ENCODE measurements at regions of chr4 and their contacts with region 1.

Region 1: DNA sequence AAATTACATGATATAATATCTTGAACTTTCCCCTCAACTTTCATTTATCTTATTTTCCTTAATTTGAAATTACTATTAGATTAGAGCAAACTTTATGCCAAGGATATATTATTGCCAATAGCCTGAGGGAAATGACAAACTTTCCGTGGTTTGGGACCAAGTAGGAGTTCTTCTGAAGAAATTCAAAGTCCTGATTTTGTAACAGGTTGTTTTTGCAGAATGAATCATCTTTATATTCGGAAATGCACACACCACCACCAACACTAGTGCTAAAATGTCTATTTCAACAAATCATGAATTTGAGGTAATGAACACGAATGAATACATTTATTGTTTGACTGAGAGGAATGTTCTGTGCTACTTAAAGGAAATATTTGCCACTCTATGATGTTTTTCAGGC is 226.7 kb downstream of the GRIA2 start:
- DNase-seq: no peak
- ATAC-seq: no peak
- H3K4me3 ChIP-seq: no peak overlapping the region
- H3K27ac ChIP-seq: no peak overlapping the region
- H3K4me1 ChIP-seq: no peaks in the 10 kb centered on the region
- H3K27me3 ChIP-seq: no peaks in the 10 kb centered on the region
- CTCF ChIP-seq: no peak
- POLR2A ChIP-seq: no peak
- RAD21 ChIP-seq: no peak

Region 2: GRCh38 chr4:157217708-157218107 is 229.5 kb before region 1 on chr4:
- CTCF ChIA-PET with region 1: no interaction called
- POLR2A ChIA-PET with region 1: no interaction called
- RAD21 ChIA-PET with region 1: no interaction called
- intact Hi-C with region 1: no loop called
- DNase-seq: peak; percentile 18
- ATAC-seq: no peak; the same call in 1 of the 2 replicates
- H3K4me3 ChIP-seq: no peak overlapping the region
- H3K27ac ChIP-seq: no peak overlapping the region
- H3K4me1 ChIP-seq: no peaks in the 10 kb centered on the region
- H3K27me3 ChIP-seq: no peaks in the 10 kb centered on the region
- CTCF ChIP-seq: peak; percentile 51 to 72 (median 53); a peak in 5 of 6 replicates
- POLR2A ChIP-seq: no peak
- RAD21 ChIP-seq: peak; percentile 62

Region 3: DNA sequence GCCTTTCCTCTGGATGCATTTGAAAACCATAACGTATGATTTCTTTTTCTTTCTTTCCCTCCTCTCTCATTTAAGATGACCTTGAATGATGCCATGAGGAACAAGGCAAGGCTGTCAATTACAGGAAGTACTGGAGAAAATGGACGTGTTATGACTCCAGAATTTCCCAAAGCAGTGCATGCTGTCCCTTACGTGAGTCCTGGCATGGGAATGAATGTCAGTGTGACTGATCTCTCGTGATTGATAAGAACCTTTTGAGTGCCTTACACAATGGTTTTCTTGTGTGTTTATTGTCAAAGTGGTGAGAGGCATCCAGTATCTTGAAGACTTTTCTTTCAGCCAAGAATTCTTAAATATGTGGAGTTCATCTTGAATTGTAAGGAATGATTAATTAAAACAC is 83.8 kb before region 1 on chr4:
- CTCF ChIA-PET with region 1: no interaction called
- POLR2A ChIA-PET with region 1: no interaction called
- RAD21 ChIA-PET with region 1: no interaction called
- intact Hi-C with region 1: no loop called
- DNase-seq: no peak
- ATAC-seq: no peak
- H3K4me3 ChIP-seq: no peak overlapping the region
- H3K27ac ChIP-seq: no peak overlapping the region
- H3K4me1 ChIP-seq: no peaks in the 10 kb centered on the region
- H3K27me3 ChIP-seq: no peaks in the 10 kb centered on the region
- CTCF ChIP-seq: no peak
- POLR2A ChIP-seq: no peak
- RAD21 ChIP-seq: no peak

Region 4: DNA sequence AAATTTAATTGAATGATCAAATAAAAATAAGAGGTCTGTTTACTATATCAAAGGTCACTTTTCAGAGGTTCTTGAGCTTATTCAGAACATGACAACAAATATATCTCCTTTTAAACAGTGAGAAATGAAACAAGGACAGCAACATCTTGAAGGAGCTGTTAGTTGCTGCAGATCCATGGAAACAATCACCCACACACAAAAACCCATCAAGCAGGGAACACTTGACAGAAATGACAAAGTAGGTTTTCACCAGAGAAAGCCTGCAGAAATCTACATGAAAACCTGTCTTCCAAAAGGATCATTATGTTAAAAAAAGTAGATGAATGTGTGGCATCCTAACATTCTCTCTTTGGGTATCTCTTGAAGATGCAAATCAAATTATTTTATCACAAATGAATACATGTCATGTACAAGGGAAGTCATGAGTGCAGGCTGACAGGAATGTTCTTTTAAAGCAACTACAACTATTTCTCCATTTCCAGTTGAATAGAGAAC is 23.6 kb before region 1 on chr4:
- CTCF ChIA-PET with region 1: no interaction called
- POLR2A ChIA-PET with region 1: no interaction called
- RAD21 ChIA-PET with region 1: no interaction called
- intact Hi-C with region 1: loop called (anchors 2 kb)
- DNase-seq: no peak
- ATAC-seq: no peak
- H3K4me3 ChIP-seq: no peak overlapping the region
- H3K27ac ChIP-seq: no peak overlapping the region
- H3K4me1 ChIP-seq: no peaks in the 10 kb centered on the region
- H3K27me3 ChIP-seq: no peaks in the 10 kb centered on the region
- CTCF ChIP-seq: no peak
- POLR2A ChIP-seq: no peak
- RAD21 ChIP-seq: no peak

Region 5: GRCh38 chr4:157576671-157577217 is 129.5 kb after region 1 on chr4:
- CTCF ChIA-PET with region 1: no interaction called
- POLR2A ChIA-PET with region 1: no interaction called
- RAD21 ChIA-PET with region 1: no interaction called
- intact Hi-C with region 1: no loop called
- DNase-seq: no peak
- ATAC-seq: no peak
- H3K4me3 ChIP-seq: no peak overlapping the region
- H3K27ac ChIP-seq: no peak overlapping the region
- H3K4me1 ChIP-seq: no peaks in the 10 kb centered on the region
- H3K27me3 ChIP-seq: no peaks in the 10 kb centered on the region
- CTCF ChIP-seq: no peak
- POLR2A ChIP-seq: no peak
- RAD21 ChIP-seq: no peak